AG04449 (cell line): ENCODE measurements at regions of chr1 and their contacts with region 1.

Region 1: GRCh38 chr1:208652296-208653160 is 408.3 kb upstream of the PLXNA2 start:
- DNase-seq: peak; percentile 28
- H3K4me3 ChIP-seq: no peak overlapping the region
- CTCF ChIP-seq: peak; percentile 78

Region 2: GRCh38 chr1:208665936-208666335 is 13.4 kb after region 1 on chr1:
- CTCF ChIA-PET with region 1: interaction called, 10 read pairs
- POLR2A ChIA-PET with region 1: no interaction called
- DNase-seq: no peak
- H3K4me3 ChIP-seq: no peak overlapping the region
- CTCF ChIP-seq: no peak

Region 3: DNA sequence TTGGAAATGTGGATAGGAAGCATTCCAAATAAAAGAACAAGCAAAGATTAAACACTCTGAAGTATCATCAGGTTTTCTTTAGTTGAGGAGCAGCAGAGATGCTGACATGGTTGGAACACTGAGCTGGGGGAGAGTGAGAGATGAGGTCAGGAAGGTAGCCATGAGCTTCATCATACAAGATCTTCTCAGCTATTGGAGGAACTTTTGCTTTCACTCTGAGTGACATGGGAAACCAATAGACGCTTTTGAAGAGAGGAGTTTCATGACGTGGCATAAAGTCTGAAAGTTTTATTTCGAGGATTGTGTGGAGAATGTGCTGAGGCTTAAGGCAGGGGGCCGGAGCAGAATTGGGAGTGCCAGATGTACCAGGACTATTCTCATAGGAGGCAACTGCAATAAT is 314.8 kb after region 1 on chr1:
- CTCF ChIA-PET with region 1: no interaction called
- POLR2A ChIA-PET with region 1: no interaction called
- DNase-seq: no peak
- H3K4me3 ChIP-seq: no peak overlapping the region
- CTCF ChIP-seq: no peak

Region 4: GRCh38 chr1:209513226-209513625 is 860.7 kb after region 1 on chr1:
- CTCF ChIA-PET with region 1: interaction called, 11 read pairs
- POLR2A ChIA-PET with region 1: no interaction called
- DNase-seq: no peak
- H3K4me3 ChIP-seq: no peak overlapping the region
- CTCF ChIP-seq: peak; percentile 63